ENCODE measurements at regions of chr6 and their contacts with region 1.

Region 1: DNA sequence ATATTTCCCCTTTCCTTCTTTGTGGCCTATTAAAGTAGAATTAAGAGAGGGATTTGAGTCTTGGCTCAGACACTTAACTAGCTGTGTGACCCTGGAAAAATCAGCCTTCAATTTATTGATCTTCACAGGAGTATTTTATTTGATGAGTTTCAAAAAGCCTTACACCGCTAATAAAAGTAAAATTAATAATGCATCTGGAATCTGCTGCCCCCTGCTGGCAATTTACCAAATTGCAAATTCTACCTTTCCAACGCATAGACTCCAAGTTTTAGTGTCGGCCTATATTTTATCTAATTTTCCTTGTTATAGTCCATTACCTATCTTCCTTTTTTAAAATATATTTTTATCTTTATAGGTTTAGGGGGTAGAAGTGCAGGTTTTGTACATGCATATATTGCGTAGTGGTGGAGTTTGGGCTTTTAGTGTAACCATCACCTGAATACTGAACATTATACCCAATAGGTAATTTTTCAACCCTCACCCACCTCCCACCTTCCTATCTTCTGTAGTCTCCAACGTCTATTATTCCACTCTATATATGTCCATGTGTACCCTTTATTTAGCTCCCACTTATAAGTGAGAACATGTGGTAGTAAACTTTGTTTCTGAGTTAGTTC is 46.3 kb downstream of the GOPC start:
- DNase-seq: peak; percentile 71
- H3K4me3 ChIP-seq: no peak overlapping the region
- H3K27ac ChIP-seq: no peak overlapping the region
- H3K4me1 ChIP-seq: no peaks in the 10 kb centered on the region
- H3K27me3 ChIP-seq: no peaks in the 10 kb centered on the region
- CTCF ChIP-seq: peak; percentile 92

Region 2: GRCh38 chr6:117482240-117483003 is 73.6 kb before region 1 on chr6 and contains the start of gene DCBLD1:
- intact Hi-C with region 1: no loop called
- DNase-seq: peak; percentile 85
- H3K4me3 ChIP-seq: peak within 1 kb of the TSS; percentile 57
- H3K27ac ChIP-seq: peak within 1 kb of the TSS; percentile 87
- H3K4me1 ChIP-seq: peaks cover 5% of the 10 kb centered on the region
- H3K27me3 ChIP-seq: no peaks in the 10 kb centered on the region
- CTCF ChIP-seq: no peak
- total RNA-seq, gene DCBLD1: 16.3 to 17.2 TPM

Region 3: GRCh38 chr6:117613920-117614560 is 58.0 kb after region 1 on chr6:
- intact Hi-C with region 1: loop called (anchors 5 kb)
- DNase-seq: no peak
- H3K4me3 ChIP-seq: no peak overlapping the region
- H3K27ac ChIP-seq: no peak overlapping the region
- H3K4me1 ChIP-seq: no peaks in the 10 kb centered on the region
- H3K27me3 ChIP-seq: no peaks in the 10 kb centered on the region
- CTCF ChIP-seq: no peak

Measured in colonic mucosa (tissue), 4 donors.